ENCODE measurements at regions of chr1 and their contacts with region 1.

Region 1: DNA sequence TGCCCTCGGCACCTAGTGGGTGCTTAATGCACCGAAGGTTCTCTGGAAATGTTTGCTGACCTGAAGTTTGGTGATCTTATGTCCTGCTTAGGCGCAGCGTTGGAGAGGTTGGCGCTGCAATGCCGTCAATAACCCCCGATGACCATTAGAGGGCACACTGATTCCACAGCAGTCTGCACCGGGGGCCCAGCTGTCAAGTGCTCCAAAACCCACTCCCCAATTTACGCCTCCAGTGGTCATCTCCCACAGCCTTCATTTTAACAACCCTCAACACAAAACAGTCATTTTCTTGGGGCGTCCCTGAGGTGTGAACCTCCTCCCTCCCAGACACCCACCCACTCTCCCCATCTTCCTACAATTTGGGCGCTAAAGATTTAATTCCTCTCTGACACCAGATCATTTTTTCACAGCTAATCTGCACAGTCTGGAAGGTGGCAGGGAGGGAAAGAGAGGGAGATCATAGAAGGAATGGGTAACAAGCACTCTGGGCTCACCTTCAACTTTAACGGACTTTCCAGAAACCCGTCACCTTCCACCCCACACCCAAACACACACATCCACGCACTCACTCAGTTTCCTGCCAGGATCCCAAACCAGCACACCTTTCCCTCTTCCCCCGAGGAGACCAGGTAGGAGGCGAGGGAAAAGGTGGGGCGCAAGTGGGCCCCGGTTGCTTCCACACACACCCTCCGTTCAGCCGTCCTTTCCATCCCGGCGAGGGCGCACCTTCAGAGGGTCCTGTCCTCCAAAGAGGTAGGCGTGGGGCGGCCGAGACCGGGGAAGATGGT is 576 bp upstream of the NPR1 start:
- DNase-seq: peak; percentile 49
- H3K4me3 ChIP-seq: peak overlapping the region; percentile 35
- H3K27ac ChIP-seq: no peak overlapping the region
- H3K4me1 ChIP-seq: peaks cover 15% of the 10 kb centered on the region
- H3K27me3 ChIP-seq: peaks cover 21% of the 10 kb centered on the region
- CTCF ChIP-seq: peak; percentile 92

Region 2: GRCh38 chr1:153733970-153734369 is 56.1 kb after region 1 on chr1:
- intact Hi-C with region 1: loop called (anchors 2 kb)
- DNase-seq: no peak
- H3K4me3 ChIP-seq: no peak overlapping the region
- H3K27ac ChIP-seq: no peak overlapping the region
- H3K4me1 ChIP-seq: peaks cover 3% of the 10 kb centered on the region
- H3K27me3 ChIP-seq: no peaks in the 10 kb centered on the region
- CTCF ChIP-seq: no peak

Region 3: GRCh38 chr1:153749408-153750005 is 71.6 kb after region 1 on chr1:
- intact Hi-C with region 1: loop called (anchors 5 kb)
- DNase-seq: peak; percentile 84
- H3K4me3 ChIP-seq: no peak overlapping the region
- H3K27ac ChIP-seq: no peak overlapping the region
- H3K4me1 ChIP-seq: peaks cover 17% of the 10 kb centered on the region
- H3K27me3 ChIP-seq: no peaks in the 10 kb centered on the region
- CTCF ChIP-seq: peak; percentile 95

Region 4: DNA sequence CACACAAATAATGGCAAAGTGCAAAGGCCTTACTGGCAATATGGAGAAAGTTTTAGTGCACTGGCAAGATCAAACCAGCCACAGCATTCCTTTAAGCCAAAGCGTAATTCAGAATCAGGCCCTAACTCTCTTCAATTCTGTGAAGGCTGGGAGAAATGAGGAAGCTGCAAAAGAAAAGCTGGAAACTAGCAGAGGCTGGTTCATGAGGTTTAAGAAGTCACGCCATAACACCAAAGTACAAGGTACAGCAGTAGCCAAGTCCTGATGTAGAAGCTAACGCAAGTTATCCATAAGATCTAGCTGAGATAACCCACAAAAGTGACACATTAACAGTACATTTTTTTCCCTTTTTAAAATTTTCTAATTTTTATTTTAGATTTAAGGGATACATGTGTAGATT is 154.4 kb after region 1 on chr1:
- intact Hi-C with region 1: no loop called
- DNase-seq: no peak
- H3K4me3 ChIP-seq: no peak overlapping the region
- H3K27ac ChIP-seq: no peak overlapping the region
- H3K4me1 ChIP-seq: no peaks in the 10 kb centered on the region
- H3K27me3 ChIP-seq: no peaks in the 10 kb centered on the region
- CTCF ChIP-seq: no peak